ENCODE measurements at regions of chr17 and their contacts with region 1.

Region 1: GRCh38 chr17:77331301-77331864 is 190.6 kb downstream of the SEC14L1 start:
- DNase-seq: no peak
- H3K4me3 ChIP-seq: no peak overlapping the region
- CTCF ChIP-seq: peak; percentile 85

Region 2: GRCh38 chr17:77343031-77343800 is 11.8 kb after region 1 on chr17:
- CTCF ChIA-PET with region 1: interaction called, 19 read pairs
- POLR2A ChIA-PET with region 1: no interaction called
- DNase-seq: no peak
- H3K4me3 ChIP-seq: no peak overlapping the region
- CTCF ChIP-seq: no peak

Region 3: DNA sequence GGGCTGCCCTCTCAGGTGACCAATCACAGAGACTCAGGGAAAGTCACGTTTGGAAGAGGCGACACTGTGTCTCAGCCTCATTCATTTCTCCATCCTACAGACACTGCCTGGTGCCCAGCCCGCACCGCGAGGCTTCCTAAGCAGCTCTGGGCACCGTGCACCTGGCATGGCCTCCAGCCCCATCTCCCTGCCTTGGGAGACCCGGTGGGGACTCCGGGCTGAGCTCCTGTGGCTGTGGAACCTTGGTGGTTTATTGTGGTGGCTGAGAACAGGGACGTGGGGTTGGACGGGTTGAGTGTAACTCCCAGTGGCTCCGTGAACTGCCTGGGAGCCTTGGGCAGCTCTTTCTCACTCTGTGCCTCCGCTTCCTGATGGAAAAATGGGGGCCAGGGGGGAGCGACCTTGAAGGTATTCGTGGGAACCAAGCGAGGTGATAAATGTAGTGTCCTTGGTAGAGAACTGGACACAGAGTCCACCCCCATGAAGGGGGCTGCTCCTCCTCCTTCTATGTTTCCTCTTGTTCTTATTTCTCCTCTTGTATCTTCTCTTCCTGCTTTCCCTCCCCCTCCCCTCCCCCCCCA is 24.8 kb after region 1 on chr17:
- CTCF ChIA-PET with region 1: interaction called, 13 read pairs
- POLR2A ChIA-PET with region 1: no interaction called
- DNase-seq: no peak
- H3K4me3 ChIP-seq: no peak overlapping the region
- CTCF ChIP-seq: no peak

Region 4: GRCh38 chr17:77374170-77374936 is 43.0 kb after region 1 on chr17:
- CTCF ChIA-PET with region 1: interaction called, 23 read pairs
- POLR2A ChIA-PET with region 1: interaction called, 3 read pairs
- DNase-seq: no peak
- H3K4me3 ChIP-seq: peak overlapping the region; percentile 79
- CTCF ChIP-seq: peak; percentile 51

Region 5: GRCh38 chr17:77420804-77421629 is 89.6 kb after region 1 on chr17:
- CTCF ChIA-PET with region 1: interaction called, 27 read pairs
- POLR2A ChIA-PET with region 1: no interaction called
- DNase-seq: peak; percentile 64
- H3K4me3 ChIP-seq: peak overlapping the region; percentile 27; the same call in 1 of the 2 replicates
- CTCF ChIP-seq: no peak

Region 6: GRCh38 chr17:77437017-77437416 is 105.6 kb after region 1 on chr17:
- CTCF ChIA-PET with region 1: interaction called, 86 read pairs
- POLR2A ChIA-PET with region 1: no interaction called
- DNase-seq: peak; percentile 31
- H3K4me3 ChIP-seq: no peak overlapping the region
- CTCF ChIP-seq: peak; percentile 21

Region 7: GRCh38 chr17:77476931-77477877 is 145.8 kb after region 1 on chr17:
- CTCF ChIA-PET with region 1: interaction called, 21 read pairs
- POLR2A ChIA-PET with region 1: no interaction called
- DNase-seq: peak; percentile 95
- H3K4me3 ChIP-seq: peak overlapping the region; percentile 25; the same call in 1 of the 2 replicates
- CTCF ChIP-seq: no peak